Vagina (tissue), 2 donors: ENCODE measurements at regions of chr1 and their contacts with region 1.

Region 1: DNA sequence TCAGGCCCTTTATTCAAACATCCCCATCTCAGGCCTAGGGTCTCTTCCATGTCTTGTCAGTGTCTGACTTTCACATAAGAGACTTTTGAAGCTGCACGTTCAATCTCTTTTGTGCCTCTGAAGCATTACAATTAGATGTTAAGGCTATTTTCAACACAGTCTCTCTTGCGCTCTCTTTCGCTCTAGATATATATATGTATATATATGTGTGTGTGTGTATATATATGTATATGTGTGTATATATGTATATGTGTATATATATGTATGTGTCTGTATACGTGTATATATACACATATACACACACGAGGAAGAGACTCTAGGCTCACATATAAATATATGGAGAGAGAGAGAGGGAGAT is 162.5 kb upstream of the RNPC3 start:
- DNase-seq: no peak
- H3K4me3 ChIP-seq: no peak overlapping the region
- H3K27ac ChIP-seq: no peak overlapping the region
- H3K4me1 ChIP-seq: no peaks in the 10 kb centered on the region
- H3K27me3 ChIP-seq: no peaks in the 10 kb centered on the region
- CTCF ChIP-seq: no peak
- POLR2A ChIP-seq: no peak

Region 2: DNA sequence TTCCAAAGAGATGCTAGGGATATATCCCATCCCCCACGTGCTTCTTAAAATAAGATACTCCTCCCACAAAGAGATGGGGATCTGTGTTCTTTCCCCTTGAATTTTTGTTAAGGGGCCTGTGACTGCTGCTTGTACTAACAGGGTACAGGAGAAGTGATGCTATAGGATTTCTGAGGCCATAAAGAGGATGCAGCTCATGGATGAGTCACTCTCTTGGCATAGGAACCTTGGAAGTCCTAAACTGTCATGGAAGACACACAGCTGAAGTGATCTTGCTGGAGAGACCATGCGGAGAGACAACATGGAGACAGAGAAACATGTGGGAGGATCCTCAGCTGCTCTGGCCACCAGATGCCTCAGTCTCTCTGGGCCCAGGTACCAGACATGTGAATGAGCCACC is 1968.9 kb before region 1 on chr1:
- intact Hi-C with region 1: loop called (anchors 5 kb)
- DNase-seq: no peak
- H3K4me3 ChIP-seq: no peak overlapping the region
- H3K27ac ChIP-seq: no peak overlapping the region
- H3K4me1 ChIP-seq: no peaks in the 10 kb centered on the region
- H3K27me3 ChIP-seq: no peaks in the 10 kb centered on the region
- CTCF ChIP-seq: no peak
- POLR2A ChIP-seq: no peak